Lower leg skin (tissue), 4 donors: ENCODE measurements at regions of chr7 and their contacts with region 1.

Region 1: GRCh38 chr7:129091484-129092002 is 36.6 kb upstream of the TNPO3 start:
- DNase-seq: peak; percentile 68 to 96
- H3K4me3 ChIP-seq: no peak overlapping the region
- CTCF ChIP-seq: peak in 1 of 3 donors; percentile 71
- POLR2A ChIP-seq: no peak

Region 2: DNA sequence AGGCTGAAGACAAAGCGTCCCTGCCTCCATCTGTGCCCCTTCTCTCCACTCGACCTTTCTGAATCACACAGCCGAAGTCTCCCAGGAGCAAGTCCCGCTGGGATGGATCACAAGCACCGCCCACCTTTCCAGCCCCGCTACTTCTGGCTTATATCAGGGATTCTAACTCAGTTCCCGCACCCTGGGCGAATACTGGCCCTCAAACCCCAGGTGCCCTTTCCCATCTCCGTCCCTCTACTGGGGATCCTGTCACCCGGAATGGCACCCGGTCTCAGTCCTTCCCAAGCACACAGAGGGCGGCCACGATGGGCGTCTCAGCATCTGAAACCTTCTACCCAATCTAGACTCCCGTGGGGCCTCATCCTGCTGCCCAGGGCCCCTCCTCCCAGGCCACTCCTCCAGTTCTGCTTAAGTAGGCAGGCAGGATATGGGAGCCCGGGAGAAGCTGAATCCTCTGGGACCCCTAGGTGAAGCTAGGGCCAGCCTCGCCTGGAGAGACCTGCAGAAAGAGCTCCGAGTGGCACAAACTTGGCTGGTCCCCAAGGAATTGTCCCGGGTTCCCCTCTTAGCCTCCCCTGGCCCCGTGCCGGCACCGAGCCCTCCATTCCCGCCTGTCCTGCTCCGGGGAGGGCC is 181.8 kb before region 1 on chr7:
- intact Hi-C with region 1: loop called (anchors 10 kb)
- DNase-seq: peak in 1 of 2 donors; percentile 86
- H3K4me3 ChIP-seq: no peak overlapping the region
- CTCF ChIP-seq: no peak
- POLR2A ChIP-seq: no peak

Region 3: DNA sequence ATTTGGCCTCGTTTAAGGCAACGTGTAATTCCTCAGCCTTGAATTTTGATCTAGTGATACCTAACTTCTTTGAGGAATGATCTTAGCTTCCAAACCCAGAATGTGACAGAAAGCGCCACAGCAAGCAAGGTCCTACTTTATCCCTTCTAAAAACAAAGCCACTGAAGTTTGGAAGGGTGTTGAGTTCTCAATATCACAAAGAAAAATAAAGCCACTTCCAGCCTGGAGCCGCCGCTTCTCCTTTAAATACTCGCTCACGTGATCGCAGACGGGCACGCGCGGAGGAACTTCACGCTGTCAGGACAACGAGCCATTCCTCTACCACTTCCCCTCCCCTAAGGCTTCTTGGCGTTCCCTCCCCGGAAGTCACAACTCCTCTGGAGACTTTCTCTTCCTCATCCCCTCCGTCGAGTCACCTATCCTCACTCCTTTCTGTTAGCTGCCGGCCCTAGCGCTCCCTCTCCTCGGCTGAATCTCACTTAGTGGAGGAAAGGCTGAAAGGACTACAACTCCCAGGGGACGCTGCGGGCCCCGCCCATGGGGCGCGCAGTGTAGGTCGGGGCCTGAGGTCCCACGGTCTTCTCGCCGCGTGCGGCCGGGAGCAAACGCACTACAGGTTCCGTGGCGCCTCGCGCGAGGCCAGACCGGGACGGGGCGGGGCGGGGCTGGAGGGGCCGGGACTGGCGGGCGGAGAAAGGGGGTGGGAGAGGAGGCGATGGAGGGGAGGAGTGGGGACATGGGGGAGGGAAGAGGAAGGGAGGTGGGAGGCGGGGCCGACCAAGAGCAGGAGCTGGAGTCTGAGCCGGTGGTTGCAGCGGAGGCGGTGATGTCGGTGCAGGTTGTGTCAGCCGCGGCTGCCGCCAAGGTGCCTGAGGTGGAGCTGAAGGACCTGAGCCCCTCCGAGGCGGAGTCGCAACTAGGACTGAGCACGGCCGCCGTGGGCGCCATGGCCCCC is 133.0 kb after region 1 on chr7 and contains the start of gene AHCYL2:
- intact Hi-C with region 1: no loop called
- DNase-seq: peak; percentile 97 to 99
- H3K4me3 ChIP-seq: peak within 1 kb of the TSS; percentile 68
- CTCF ChIP-seq: no peak
- POLR2A ChIP-seq: no peak
- total RNA-seq, gene AHCYL2: 31.1 to 45.8 (median 39.2) TPM